A549 (cell line): ENCODE measurements at regions of chr10 and their contacts with region 1.

Region 1: DNA sequence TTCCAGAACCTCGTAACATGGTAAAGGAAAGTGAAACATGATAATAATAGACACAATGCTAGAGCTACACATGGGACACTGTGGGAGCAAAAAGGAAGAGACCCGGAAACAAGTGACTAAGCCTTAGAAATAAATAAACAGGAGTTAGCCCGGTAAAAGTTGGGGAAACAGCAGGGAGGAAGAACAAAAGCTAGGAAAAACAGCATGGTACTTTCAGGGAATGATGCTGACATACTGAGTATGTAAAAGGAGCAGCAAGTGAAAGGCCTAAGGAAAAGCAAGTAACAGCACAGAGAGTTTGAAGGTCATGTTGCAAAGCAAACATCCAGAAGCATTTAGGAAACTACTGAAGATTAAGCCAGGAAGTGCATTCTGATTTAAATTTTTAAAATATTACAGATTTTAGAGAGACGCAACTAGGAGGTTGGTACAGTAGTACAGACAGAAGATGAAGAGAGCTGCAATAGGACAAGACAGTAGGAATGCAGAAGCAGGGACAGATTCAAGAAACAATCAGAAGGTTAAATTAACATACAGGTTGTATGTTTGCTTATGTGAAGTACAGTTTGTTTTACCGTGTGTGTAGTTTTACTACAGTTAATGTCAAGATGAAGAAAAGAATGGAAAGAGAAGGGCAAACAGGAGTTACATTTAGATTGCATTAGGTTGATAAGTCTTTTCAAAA is 63.7 kb downstream of the ARHGAP12 start:
- DNase-seq: peak; percentile 23 to 44
- ATAC-seq: peak in 1 of 2 experiments; percentile 59; a peak in 3 of 6 replicates
- H3K4me3 ChIP-seq: peak overlapping the region; percentile 33
- H3K27ac ChIP-seq: peak overlapping the region; percentile 77 to 90
- H3K4me1 ChIP-seq: peaks cover 71% of the 10 kb centered on the region
- CTCF ChIP-seq: no peak
- EP300 ChIP-seq: no peak
- POLR2A ChIP-seq: no peak
- RAD21 ChIP-seq: no peak

Region 2: GRCh38 chr10:31836569-31837406 is 28.2 kb before region 1 on chr10:
- CTCF ChIA-PET with region 1: interaction called, 15 read pairs
- POLR2A ChIA-PET with region 1: no interaction called
- DNase-seq: peak; percentile 36 to 68
- ATAC-seq: peak; percentile 89 to 93
- H3K4me3 ChIP-seq: no peak overlapping the region
- H3K27ac ChIP-seq: no peak overlapping the region
- H3K4me1 ChIP-seq: no peaks in the 10 kb centered on the region
- CTCF ChIP-seq: peak; percentile 85
- EP300 ChIP-seq: no peak
- POLR2A ChIP-seq: no peak
- RAD21 ChIP-seq: peak; percentile 88 to 90

Region 3: GRCh38 chr10:31883397-31883796 is 18.4 kb after region 1 on chr10:
- CTCF ChIA-PET with region 1: interaction called, 19 read pairs
- POLR2A ChIA-PET with region 1: no interaction called
- DNase-seq: no peak
- ATAC-seq: 0 out of 6 replicates have a peak, but pooled peaks of 1 of the 2 experiments have one; percentile 6
- H3K4me3 ChIP-seq: no peak overlapping the region
- H3K27ac ChIP-seq: peak overlapping the region; percentile 81 to 89
- H3K4me1 ChIP-seq: peaks cover 92% of the 10 kb centered on the region
- CTCF ChIP-seq: no peak
- EP300 ChIP-seq: no peak
- POLR2A ChIP-seq: no peak
- RAD21 ChIP-seq: no peak

Region 4: DNA sequence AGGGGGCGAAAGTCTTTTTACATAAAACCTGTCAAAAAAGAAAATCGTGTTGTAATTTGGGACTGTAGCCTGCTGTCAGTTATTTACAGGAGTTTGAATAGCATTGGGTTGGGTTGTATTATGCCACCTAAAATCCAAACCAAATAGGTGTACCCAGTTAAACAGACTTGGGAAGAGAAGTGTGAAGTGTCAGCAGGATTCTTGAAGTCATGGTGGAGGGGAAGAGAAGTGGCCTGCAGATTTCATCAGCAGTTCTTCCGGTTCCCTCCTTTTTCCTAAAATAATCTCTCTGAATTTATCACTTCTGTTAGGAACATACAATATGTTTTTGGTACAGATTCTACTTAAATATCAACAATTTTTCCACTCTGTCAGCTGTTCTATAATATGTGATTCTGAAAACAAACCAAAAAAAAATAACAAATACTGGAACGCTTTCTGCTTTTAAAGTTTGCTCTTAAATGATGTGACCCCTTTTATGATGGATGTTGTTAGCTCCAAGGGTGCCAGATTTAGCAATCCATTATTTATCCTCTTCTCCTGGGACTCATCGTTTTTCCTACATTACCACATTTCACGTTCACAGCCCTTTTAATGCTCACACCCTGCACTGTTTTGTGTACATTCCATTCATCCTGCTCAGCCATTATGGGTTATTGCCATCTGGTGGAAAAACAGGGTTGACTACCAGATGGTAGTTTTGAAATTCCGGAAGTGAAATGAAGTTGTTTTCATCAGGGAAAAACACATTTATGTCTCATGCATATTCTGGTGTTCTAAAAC is 82.4 kb after region 1 on chr10:
- CTCF ChIA-PET with region 1: interaction called, 136 read pairs
- POLR2A ChIA-PET with region 1: interaction called, 9 read pairs
- DNase-seq: peak; percentile 63 to 87
- ATAC-seq: peak; percentile 88 to 91
- H3K4me3 ChIP-seq: no peak overlapping the region
- H3K27ac ChIP-seq: peak overlapping the region; percentile 72 to 82
- H3K4me1 ChIP-seq: peaks cover 67% of the 10 kb centered on the region
- CTCF ChIP-seq: peak; percentile 81
- EP300 ChIP-seq: peak in 1 of 2 experiments; percentile 45; a peak in 1 of 5 replicates
- POLR2A ChIP-seq: no peak
- RAD21 ChIP-seq: peak; percentile 93 to 97